BJ (cell line): ENCODE measurements at regions of chr12 and their contacts with region 1.

Region 1: DNA sequence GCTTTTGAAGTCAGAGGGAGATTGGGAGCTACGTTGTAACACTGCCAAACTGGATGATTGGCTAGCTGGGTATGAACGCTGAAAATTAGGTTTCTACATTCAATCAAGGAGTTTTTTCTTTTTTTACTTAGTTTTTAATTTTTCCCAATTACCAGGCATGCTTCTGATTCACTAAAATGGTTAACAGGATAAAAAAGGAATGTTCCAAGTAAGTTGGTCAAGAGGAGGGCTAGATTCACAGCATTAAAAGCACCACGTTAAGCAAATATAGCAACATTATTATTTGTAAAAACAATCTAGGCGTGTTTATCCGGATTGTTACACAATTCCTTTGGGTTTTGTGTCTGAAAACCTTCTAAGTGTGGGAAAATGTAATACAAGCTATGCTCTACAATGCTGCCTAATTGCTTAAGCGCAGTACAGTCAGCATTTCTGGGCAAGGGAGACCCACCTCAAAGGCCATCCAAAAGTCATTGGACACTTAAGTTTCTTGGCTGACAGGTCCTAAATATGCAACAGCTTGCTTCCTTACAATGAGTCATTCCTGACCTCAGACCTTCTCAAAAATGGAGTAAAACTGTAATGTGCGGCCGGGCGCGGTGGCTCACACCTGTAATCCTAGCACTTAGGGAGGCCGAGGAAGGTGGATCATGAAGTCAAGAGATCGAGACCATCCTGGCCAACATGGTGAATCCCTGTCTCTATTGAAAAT is 1.2 kb downstream of the RPLP0 start:
- DNase-seq: peak; percentile 27
- H3K4me3 ChIP-seq: peak overlapping the region; percentile 78
- H3K27me3 ChIP-seq: no peaks in the 10 kb centered on the region
- CTCF ChIP-seq: no peak

Region 2: GRCh38 chr12:120181991-120182631 is 17.6 kb before region 1 on chr12:
- CTCF ChIA-PET with region 1: no interaction called
- POLR2A ChIA-PET with region 1: interaction called, 12 read pairs
- DNase-seq: no peak
- H3K4me3 ChIP-seq: no peak overlapping the region
- H3K27me3 ChIP-seq: no peaks in the 10 kb centered on the region
- CTCF ChIP-seq: no peak

Region 3: DNA sequence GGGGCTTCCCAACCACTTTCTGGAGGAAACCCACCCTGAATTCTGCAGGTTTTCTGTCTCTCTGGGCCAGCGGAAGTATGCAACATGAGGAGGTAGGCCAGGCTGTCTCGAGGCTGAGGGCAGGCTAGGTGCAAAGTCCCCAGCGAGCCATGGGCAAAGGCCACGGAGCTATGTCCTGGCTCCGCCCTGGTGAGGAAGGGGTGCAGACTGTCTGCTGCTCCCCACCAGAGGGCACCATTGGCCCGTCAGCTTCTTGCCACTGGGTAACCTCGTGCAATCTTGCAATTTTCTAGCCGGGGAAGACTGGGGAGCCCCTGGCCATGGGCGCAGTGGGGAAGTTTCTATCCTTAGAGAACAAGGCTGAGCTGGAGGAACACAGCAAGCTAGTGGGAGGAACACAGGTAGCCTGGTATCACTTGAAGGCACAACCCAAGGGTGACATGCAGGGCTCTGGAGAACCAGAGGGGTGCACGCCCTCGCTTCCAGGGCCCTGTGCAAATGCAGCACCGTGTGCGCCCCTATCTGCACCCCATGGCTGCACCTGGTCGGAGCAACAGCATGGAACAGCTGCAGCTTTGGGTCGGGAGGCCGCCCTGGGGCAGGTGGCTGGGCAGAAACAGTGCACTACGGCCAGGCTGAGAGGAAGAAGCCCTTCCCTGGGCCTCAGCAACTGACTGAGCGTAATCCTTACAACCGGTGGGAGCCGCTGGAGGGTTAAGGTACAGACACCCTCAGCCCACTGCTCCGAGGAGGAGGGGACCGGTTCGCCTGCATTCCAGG is 28.7 kb after region 1 on chr12:
- CTCF ChIA-PET with region 1: interaction called, 77 read pairs
- POLR2A ChIA-PET with region 1: interaction called, 23 read pairs
- DNase-seq: no peak
- H3K4me3 ChIP-seq: no peak overlapping the region
- H3K27me3 ChIP-seq: no peaks in the 10 kb centered on the region
- CTCF ChIP-seq: peak; percentile 91

Region 4: DNA sequence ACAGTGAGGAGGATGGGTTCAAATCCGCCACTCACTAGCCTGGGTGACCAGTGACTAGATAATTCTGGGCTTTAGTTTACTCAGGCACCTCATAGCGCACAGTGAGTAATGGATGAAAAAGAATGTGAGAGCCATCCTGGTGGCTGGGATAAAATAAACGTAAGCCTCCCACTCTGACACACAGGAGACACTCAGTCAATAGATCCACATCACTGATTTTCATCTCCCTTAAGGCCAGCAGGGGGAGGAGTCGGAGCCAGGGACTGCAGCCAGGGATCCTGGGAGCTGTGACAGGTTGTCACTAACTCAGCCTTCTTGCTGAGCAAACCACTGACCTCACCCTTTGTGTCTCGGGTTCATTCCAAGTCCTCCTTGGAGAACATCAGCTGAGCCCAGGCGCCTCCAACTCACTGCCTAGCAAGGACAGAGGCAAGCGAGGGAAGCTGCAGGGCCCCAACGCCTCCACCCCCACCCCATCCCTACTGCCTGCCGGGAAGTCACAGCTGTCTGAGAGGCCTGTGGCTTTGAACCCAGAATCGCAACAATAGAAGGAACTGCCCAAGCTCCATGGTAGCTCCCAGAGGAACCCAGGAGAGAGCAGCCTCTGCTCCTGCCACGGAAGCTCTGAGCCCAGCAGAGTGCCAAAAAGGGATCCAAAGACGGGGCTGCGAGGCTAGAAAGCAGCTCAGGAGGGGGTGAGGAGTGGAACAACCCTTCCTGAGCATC is 35.1 kb after region 1 on chr12:
- CTCF ChIA-PET with region 1: interaction called, 77 read pairs
- POLR2A ChIA-PET with region 1: interaction called, 23 read pairs
- DNase-seq: peak; percentile 95
- H3K4me3 ChIP-seq: no peak overlapping the region
- H3K27me3 ChIP-seq: no peaks in the 10 kb centered on the region
- CTCF ChIP-seq: peak; percentile 61

Region 5: DNA sequence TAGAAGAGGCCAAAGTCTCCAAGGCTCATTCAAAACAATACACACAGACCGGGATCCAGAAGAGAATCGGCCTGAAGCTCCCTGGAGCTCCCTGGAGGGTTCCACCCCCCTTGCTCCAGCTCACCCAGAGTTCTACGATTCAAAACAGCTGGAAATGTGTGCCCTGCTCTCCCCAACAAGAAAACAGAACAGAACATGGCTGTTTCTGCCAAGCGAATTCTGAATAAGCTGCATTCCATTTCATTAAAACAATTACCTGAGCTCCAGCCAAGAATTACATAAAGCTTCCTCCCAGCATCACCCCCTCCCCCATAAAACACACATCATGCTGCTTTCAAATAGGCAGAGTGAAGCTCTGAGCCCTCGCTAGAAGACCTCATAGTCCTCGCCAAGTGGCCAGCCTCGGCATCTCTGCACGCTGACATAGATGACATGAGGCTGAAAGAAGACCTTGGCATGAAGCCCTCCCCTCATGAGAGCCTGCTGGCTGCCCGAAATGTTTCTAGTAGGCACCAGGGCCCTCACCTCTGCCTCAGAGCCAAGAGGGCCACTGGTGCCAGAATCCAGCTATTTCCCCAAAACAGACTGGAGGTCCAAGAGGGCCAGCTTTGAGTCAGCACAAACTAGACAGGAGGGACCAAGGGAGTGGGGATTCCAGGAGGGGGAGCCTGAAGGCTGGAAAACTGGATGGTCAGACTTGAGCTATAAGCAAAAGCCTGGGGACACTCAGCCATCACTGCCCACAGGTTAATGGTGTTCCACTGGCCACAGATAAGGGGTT is 57.5 kb after region 1 on chr12:
- CTCF ChIA-PET with region 1: interaction called, 13 read pairs
- POLR2A ChIA-PET with region 1: interaction called, 16 read pairs
- DNase-seq: peak; percentile 80
- H3K4me3 ChIP-seq: no peak overlapping the region
- H3K27me3 ChIP-seq: no peaks in the 10 kb centered on the region
- CTCF ChIP-seq: no peak

Region 6: DNA sequence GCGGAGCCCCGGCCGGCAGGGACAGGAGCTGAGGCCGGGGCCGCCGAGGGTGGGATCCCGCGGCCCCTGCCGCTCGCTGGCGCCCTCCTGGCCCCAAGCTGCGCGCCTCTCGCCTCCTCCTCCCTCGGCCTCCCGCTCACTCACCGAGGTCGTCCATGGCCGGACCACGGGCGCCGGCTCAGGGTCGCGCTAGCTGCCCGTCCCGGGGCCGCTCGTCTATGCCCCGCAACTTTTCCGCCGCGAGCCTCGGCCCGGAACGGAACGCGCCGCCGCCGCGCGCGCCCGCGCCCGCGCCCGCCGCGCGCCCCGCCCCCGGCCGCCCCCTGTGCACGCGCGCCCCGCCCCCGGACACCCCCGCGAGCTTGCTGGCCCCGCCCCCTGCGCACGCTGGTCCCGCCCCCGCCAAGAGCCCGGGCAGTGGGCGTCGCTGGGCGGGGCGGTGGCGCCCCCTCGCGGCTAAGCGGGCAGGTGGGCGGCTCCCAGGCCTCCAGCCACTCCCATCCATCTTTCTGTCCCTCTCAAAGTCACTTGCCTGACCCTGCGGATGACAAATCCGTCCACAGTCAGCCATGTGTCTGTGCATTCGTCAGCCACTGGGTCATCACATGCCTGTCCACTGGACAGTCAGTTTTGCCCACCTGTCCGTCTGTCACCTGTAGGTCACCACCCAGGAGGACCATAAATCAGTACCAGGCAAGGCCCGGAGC is 65.9 kb after region 1 on chr12 and contains the start of gene PXN:
- CTCF ChIA-PET with region 1: interaction called, 13 read pairs
- POLR2A ChIA-PET with region 1: interaction called, 29 read pairs
- DNase-seq: no peak
- H3K4me3 ChIP-seq: peak within 1 kb of the TSS; percentile 95
- H3K27me3 ChIP-seq: no peaks in the 10 kb centered on the region
- CTCF ChIP-seq: peak; percentile 59
- polyA plus RNA-seq, gene PXN: 23.9 and 41.8 TPM in 2 replicates

Region 7: DNA sequence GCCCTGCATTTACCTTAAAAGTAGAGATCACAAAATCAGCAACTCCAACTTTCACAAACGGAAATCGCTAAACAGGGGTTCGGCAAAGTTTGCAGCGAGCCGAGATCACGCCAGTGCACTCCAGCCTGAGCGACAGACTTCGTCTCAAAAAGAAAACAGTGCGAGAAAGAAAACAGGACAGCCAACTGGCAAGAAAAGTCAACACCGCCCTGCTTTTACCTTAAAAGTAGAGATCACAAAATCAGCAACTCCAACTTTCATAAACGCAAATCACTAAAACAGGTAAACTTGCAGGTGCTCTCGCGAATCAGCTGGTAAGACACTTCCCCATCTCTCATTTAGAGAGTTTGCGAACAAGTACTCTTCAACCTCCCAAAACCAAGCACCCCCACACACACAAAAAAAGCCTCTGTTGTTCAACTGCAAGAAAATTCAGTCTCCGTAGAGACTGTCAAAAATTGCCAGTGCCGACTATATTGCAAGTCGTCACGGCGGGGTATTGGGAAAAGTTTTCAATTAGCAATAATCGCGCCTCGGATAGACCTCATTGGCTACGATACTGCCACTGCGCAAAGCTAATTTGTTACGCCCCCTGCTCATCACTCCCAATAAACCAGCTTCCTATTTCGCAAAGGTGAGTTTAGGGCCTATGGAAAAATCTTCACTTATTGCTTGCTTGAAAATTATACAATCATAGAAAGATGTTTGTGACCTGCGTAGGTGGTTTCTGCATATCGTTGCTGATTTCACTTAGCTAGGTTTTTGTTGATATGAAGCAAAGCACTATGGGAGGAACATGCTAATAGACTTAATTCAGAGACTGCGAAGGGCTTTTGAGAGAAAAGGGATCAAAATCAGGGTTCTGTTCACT is 93.1 kb after region 1 on chr12 and contains the start of gene RNU4-1:
- CTCF ChIA-PET with region 1: no interaction called
- POLR2A ChIA-PET with region 1: interaction called, 29 read pairs
- DNase-seq: peak; percentile 59
- H3K4me3 ChIP-seq: peak within 1 kb of the TSS; percentile 47
- H3K27me3 ChIP-seq: no peaks in the 10 kb centered on the region
- CTCF ChIP-seq: no peak
- polyA plus RNA-seq, gene RNU4-1: not detected in 2 replicates